ENCODE measurements at regions of chr9 and their contacts with region 1.

Region 1: DNA sequence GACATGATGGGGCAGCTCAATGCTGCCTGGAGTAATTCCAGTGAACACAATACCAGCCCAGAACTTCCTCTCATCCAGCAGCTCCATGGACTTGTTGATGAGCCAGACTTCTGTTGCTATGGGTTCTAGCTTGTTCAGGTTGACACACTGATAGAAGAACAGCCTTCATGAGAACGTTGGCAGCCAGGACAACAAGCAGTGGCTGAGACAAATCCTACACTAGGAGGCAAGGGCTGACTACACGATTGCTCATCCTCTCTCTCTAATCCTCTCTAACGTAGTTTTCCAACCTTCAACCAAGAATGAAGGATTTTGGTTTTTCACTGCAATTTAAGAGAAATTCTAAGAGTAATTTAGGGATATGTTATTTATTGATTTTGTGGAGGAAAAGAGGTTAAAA is 67.8 kb downstream of the NIPSNAP3B start:
- DNase-seq: no peak
- H3K4me3 ChIP-seq: no peak overlapping the region
- H3K27ac ChIP-seq: peak overlapping the region; percentile 15
- H3K4me1 ChIP-seq: peaks cover 45% of the 10 kb centered on the region
- H3K27me3 ChIP-seq: no peaks in the 10 kb centered on the region
- CTCF ChIP-seq: no peak
- POLR2A ChIP-seq: no peak

Region 2: DNA sequence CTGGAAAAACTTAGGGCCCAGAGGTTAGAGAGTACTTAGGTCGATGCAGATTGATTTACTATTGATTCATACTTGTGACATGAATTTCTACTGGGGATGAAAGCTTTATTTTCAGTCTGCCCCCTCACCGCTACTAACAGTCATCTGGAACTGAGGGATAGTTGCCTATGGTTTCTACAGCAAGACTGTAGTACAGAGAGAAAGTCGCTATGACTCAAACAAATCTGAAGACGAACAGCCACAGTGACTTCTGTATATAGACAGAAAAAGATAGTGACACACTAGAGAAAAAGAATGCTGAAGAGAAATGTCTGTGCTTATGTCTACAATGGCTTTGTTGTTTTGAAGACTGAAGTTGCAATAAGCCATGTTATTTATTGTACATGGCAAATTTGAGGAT is 120.1 kb before region 1 on chr9:
- CTCF ChIA-PET with region 1: no interaction called
- POLR2A ChIA-PET with region 1: no interaction called
- dilution Hi-C with region 1: no loop called
- intact Hi-C with region 1: no loop called
- DNase-seq: no peak
- H3K4me3 ChIP-seq: no peak overlapping the region
- H3K27ac ChIP-seq: no peak overlapping the region
- H3K4me1 ChIP-seq: no peaks in the 10 kb centered on the region
- H3K27me3 ChIP-seq: no peaks in the 10 kb centered on the region
- CTCF ChIP-seq: no peak
- POLR2A ChIP-seq: no peak

Region 3: DNA sequence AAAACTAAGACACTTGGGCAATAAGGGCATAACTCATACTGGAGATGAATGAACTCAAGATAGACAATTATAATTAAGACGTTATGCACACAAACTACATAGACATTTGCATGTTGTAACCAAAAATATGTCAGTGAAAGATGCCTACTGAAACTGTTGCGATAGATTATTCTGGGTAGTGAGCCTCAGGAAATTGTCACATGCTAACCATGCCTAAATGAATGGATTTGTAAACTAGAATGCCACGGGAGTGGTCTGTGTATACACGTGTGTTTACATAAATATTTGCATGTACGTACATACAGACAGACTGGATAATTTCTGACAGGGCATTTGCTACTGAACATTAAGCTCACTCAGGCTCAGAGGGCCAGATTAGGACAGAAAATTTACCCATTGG is 66.5 kb before region 1 on chr9:
- CTCF ChIA-PET with region 1: no interaction called
- POLR2A ChIA-PET with region 1: no interaction called
- dilution Hi-C with region 1: no loop called
- intact Hi-C with region 1: loop called (anchors 5 kb)
- DNase-seq: no peak
- H3K4me3 ChIP-seq: no peak overlapping the region
- H3K27ac ChIP-seq: no peak overlapping the region
- H3K4me1 ChIP-seq: peaks cover 6% of the 10 kb centered on the region
- H3K27me3 ChIP-seq: no peaks in the 10 kb centered on the region
- CTCF ChIP-seq: no peak
- POLR2A ChIP-seq: no peak

Region 4: GRCh38 chr9:104808035-104808614 is 23.6 kb before region 1 on chr9:
- CTCF ChIA-PET with region 1: interaction called, 7 read pairs
- POLR2A ChIA-PET with region 1: no interaction called
- dilution Hi-C with region 1: no loop called
- intact Hi-C with region 1: loop called (anchors 1 kb)
- DNase-seq: peak; percentile 46
- H3K4me3 ChIP-seq: no peak overlapping the region
- H3K27ac ChIP-seq: no peak overlapping the region
- H3K4me1 ChIP-seq: no peaks in the 10 kb centered on the region
- H3K27me3 ChIP-seq: no peaks in the 10 kb centered on the region
- CTCF ChIP-seq: peak; percentile 24 to 48
- POLR2A ChIP-seq: no peak

Region 5: GRCh38 chr9:104850786-104851545 is 19.3 kb after region 1 on chr9:
- CTCF ChIA-PET with region 1: interaction called, 5 read pairs
- POLR2A ChIA-PET with region 1: no interaction called
- dilution Hi-C with region 1: no loop called
- intact Hi-C with region 1: loop called (anchors 1 kb)
- DNase-seq: peak; percentile 75
- H3K4me3 ChIP-seq: no peak overlapping the region
- H3K27ac ChIP-seq: no peak overlapping the region
- H3K4me1 ChIP-seq: peaks cover 17% of the 10 kb centered on the region
- H3K27me3 ChIP-seq: no peaks in the 10 kb centered on the region
- CTCF ChIP-seq: no peak
- POLR2A ChIP-seq: no peak

Region 6: DNA sequence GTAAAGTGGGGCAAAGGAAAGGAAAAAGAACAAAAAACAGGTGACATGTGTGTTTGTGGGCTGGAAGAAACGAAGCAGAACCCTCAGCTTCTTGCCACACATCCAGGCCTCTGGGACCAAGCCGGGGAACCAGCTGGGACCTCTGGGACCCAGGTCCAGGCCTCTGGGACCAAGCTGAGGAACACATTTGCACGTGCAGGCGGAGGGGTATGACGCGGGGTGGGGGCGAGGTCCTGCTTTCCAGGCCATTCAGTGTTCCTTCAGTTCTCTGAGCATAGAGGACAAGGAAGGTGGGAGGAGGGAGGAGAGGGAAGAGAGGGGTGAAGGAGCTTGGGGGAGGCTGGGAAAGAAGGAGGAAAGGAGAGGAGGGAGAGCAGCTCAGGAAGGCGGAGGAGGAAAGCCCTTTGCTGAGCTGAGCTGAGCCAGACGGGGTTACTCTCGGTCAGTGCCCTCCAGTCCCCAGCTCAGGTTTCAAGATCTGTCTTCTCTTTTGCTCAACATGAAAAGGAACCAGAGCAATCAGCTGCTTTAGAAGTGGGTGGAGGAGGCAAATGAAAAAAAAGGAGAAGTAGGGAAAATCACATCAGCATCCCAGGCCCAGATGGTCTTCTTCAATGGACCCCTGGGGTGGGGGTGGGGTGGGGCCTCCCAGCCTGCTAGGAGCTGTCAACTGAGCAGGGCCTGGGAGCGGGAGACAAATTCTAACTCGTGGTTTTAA is 37.2 kb after region 1 on chr9:
- CTCF ChIA-PET with region 1: interaction called, 11 read pairs
- POLR2A ChIA-PET with region 1: no interaction called
- dilution Hi-C with region 1: no loop called
- intact Hi-C with region 1: loop called (anchors 2 kb)
- DNase-seq: peak; percentile 86
- H3K4me3 ChIP-seq: no peak overlapping the region
- H3K27ac ChIP-seq: no peak overlapping the region
- H3K4me1 ChIP-seq: peaks cover 38% of the 10 kb centered on the region
- H3K27me3 ChIP-seq: no peaks in the 10 kb centered on the region
- CTCF ChIP-seq: no peak
- POLR2A ChIP-seq: no peak